ENCODE measurements at regions of chr19 and their contacts with region 1.

Region 1: DNA sequence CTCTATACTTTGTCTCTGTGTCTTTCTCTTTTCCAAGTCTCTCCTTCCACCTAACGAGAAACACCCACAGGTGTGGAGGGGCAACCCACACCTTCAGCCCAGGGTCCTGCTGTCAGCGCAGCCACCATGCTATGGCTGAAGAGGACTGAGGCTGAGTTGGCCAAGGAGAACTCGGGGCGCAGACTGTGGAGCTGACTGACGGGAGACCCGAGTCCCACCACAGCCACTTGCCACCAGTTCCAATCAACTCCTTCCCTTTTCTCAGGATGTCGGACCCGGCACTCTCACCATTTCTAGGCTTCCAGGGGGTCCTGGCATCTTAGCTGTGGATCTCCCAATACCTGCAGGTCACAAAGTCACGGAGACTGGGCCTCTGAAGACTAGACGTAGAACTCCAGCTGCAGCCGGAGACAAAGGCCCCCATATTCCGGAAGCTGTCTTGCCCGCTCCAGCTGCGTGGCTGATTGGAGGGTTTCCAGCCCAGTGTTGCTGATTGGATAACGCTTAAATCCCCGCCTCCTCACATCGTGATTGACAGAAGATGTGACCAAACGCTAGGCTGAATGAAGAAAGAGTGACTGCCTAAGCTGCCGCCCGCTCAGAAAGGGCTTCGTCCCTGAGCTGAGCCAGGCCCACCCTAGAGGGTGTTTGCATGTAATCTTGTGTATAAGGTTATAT is 63.6 kb downstream of the ZNF429 start:
- DNase-seq: no peak
- H3K4me3 ChIP-seq: no peak overlapping the region
- H3K4me1 ChIP-seq: no peaks in the 10 kb centered on the region
- H3K27me3 ChIP-seq: no peaks in the 10 kb centered on the region

Region 2: GRCh38 chr19:21109116-21109515 is 459.8 kb before region 1 on chr19:
- in situ Hi-C with region 1: loop called (anchors 25 kb)
- DNase-seq: no peak
- H3K4me3 ChIP-seq: no peak overlapping the region
- H3K4me1 ChIP-seq: no peaks in the 10 kb centered on the region
- H3K27me3 ChIP-seq: no peaks in the 10 kb centered on the region

Measured in HAP-1 (cell line).